Heart left ventricle (tissue), 16 donors: ENCODE measurements at regions of chr19 and their contacts with region 1.

Region 1: GRCh38 chr19:45250832-45251451 is at the start of gene MARK4:
- DNase-seq: peak; percentile 62 to 78 (median 65)
- ATAC-seq: peak in 3 of 4 donors; percentile 48 to 81 (median 76)
- H3K4me3 ChIP-seq: peak within 1 kb of the TSS; percentile 74 to 99 (median 88)
- H3K27ac ChIP-seq: peak within 1 kb of the TSS in 11 of 12 donors; percentile 48 to 86 (median 69)
- H3K4me1 ChIP-seq: peaks cover 0 to 50% (median 30%) of the 10 kb centered on the region in 12 donors
- H3K27me3 ChIP-seq: no peaks in the 10 kb centered on the region
- CTCF ChIP-seq: no peak
- POLR2A ChIP-seq: peak in 1 of 2 donors; percentile 43
- total RNA-seq, gene MARK4: 25.5 to 46.9 (median 32.8) TPM

Region 2: DNA sequence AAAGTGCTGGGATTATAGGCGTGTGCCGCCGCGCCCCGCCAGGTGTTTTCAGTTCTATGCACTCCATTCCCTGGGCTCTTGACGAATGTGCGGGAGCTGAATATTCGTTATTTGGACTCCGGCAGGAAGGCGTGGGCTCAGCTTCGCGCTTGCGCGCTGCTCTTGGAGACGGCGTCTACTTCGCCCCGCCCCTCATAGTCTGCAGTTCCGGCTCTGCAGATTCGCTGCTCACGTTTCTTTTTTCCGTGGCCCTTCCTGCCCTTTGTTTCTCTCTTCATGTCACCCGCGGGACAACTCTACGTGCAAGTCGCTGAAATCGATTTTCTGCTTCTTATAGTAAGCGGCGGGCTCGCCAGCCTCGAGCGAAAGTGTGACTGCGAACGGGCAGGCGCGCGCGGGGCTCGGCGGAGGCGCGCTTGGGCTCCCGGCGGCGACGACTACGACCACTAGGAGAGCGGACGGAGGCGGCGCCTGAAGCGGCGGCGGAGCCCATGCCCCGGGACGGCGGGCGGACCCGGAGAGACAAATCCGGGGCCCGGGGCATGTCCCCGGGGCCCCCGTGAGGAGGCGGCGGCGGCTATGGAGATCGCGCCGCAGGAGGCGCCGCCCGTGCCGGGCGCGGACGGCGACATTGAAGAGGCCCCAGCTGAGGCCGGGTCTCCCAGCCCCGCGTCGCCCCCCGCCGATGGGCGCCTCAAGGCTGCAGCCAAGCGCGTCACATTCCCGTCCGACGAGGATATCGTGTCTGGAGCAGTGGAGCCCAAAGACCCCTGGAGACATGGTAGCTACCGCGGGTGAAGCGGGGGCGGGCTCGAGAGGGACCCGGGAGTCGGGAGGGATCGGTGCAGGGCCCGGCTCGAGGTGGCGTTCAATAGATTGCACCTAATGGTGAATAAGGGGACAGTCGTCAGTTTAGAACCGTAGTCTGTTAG is 157.9 kb before region 1 on chr19 and contains the start of gene PPP1R37:
- intact Hi-C with region 1: loop called in 2 of 10 experiments (anchors 5 kb)
- DNase-seq: peak; percentile 92 to 97 (median 96)
- ATAC-seq: peak; percentile 86 to 94 (median 88)
- H3K4me3 ChIP-seq: peak within 1 kb of the TSS; percentile 65 to 99 (median 96)
- H3K27ac ChIP-seq: peak within 1 kb of the TSS; percentile 21 to 96 (median 89)
- H3K4me1 ChIP-seq: peaks cover 10 to 66% (median 49%) of the 10 kb centered on the region in 12 donors
- H3K27me3 ChIP-seq: no peaks in the 10 kb centered on the region
- CTCF ChIP-seq: peak in 10 of 12 donors; percentile 10 to 55 (median 34)
- POLR2A ChIP-seq: peak in 1 of 2 donors; percentile 34
- total RNA-seq, gene PPP1R37: 16.0 to 33.7 (median 17.1) TPM

Region 3: GRCh38 chr19:45200568-45200994 is 50.4 kb before region 1 on chr19:
- intact Hi-C with region 1: loop called in 7 of 10 experiments (anchors 2 to 5 kb)
- DNase-seq: peak in 1 of 5 donors; percentile 23
- ATAC-seq: peak; percentile 51 to 69 (median 62)
- H3K4me3 ChIP-seq: no peak overlapping the region
- H3K27ac ChIP-seq: no peak overlapping the region
- H3K4me1 ChIP-seq: no peaks in the 10 kb centered on the region
- H3K27me3 ChIP-seq: no peaks in the 10 kb centered on the region
- CTCF ChIP-seq: peak; percentile 15 to 57 (median 40)
- POLR2A ChIP-seq: no peak

Region 4: DNA sequence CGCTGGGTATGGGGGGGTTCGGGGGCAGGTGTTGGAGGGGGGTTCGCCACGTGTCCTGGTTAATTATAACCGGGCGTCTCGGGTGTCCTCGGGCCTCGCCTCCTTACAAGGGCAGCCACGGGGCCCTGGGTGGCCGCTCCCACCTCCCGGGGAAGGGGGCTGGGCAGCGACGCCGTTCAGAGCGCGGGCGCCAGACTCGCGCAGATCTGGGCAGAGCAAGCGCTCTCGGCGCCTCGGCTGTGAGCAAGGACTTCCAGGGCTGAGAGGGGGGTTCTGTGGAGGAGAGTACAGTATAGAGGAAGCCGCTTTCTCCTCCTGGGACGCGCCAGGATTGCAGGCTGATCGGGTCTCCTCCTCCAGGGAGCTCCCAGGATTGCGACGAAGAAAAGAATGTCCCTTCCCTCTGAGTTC is 72.7 kb after region 1 on chr19:
- intact Hi-C with region 1: loop called in 2 of 10 experiments (anchors 5 kb)
- DNase-seq: peak; percentile 74 to 92 (median 84)
- ATAC-seq: peak; percentile 71 to 74 (median 72)
- H3K4me3 ChIP-seq: peak overlapping the region in 11 of 12 donors; percentile 5 to 81 (median 59)
- H3K27ac ChIP-seq: peak overlapping the region; percentile 81 to 100 (median 96)
- H3K4me1 ChIP-seq: peaks cover 0 to 26% (median 10%) of the 10 kb centered on the region in 12 donors
- H3K27me3 ChIP-seq: peaks cover 0 to 27% (median 14%) of the 10 kb centered on the region in 9 donors
- CTCF ChIP-seq: no peak
- POLR2A ChIP-seq: peak; percentile 53 to 70

Region 5: GRCh38 chr19:45331423-45331822 is 80.5 kb after region 1 on chr19:
- intact Hi-C with region 1: loop called in 6 of 10 experiments (anchors 5 kb)
- DNase-seq: no peak
- ATAC-seq: no peak
- H3K4me3 ChIP-seq: no peak overlapping the region
- H3K27ac ChIP-seq: no peak overlapping the region
- H3K4me1 ChIP-seq: peaks cover 0 to 2% (median 0%) of the 10 kb centered on the region in 12 donors
- H3K27me3 ChIP-seq: no peaks in the 10 kb centered on the region
- CTCF ChIP-seq: no peak
- POLR2A ChIP-seq: no peak

Region 6: GRCh38 chr19:45340232-45340898 is 89.4 kb after region 1 on chr19 and contains the start of gene KLC3:
- intact Hi-C with region 1: loop called in 6 of 10 experiments (anchors 2 to 5 kb)
- DNase-seq: no peak
- ATAC-seq: no peak
- H3K4me3 ChIP-seq: peak within 1 kb of the TSS in 9 of 12 donors; percentile 6 to 45 (median 22)
- H3K27ac ChIP-seq: no peak within 1 kb of the TSS
- H3K4me1 ChIP-seq: peaks cover 0 to 15% (median 1%) of the 10 kb centered on the region in 12 donors
- H3K27me3 ChIP-seq: peaks cover 10 to 23% (median 14%) of the 10 kb centered on the region in 9 donors
- CTCF ChIP-seq: no peak
- POLR2A ChIP-seq: no peak
- total RNA-seq, gene KLC3: 0.12 to 0.69 (median 0.30) TPM in 4 of 9 donors, not detected in the others